Sigmoid colon (tissue), 7 donors: ENCODE measurements at regions of chr17 and their contacts with region 1.

Region 1: DNA sequence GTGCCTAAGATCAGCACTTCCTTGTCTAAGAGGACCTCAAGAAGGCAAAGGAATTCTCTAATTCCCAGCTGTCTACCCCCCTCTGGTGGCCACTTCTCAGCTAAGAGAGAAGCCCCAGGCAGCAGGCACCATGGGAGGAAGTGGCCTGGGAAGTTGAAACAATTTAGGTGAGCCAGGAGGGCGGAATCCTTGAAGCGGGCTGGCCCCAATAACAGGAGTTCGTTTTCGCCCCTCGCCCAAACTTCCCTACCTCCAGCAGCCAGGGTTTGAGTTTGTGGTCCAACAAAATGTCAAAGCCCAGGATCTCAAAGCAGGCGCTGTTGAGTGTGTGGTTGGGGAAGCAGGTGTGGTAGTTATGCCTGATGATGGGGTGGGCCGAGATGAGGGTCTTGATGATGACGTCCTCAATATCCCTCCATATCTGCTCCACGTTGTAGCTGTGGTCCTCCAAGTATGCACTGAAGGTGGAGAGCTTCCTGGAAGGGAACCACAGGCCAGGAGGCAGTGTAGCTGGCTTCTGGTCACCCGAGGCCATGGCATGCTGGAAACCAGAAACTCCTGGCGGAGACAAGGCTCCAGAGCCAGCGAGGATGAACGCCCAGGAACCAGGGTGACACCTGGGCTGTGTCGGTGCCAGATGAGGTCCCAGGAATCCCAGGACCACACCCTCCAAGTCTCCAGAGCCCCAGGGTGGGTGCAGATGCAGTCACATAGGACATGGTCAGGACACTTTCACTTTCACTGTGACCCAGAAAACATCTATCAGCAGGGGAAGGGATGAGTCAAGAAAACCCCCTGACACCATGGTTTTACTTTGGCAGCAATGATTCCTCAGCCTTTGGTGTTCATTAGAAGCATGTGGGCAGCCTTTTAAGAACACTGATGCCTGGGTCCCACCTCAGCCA is 25.6 kb downstream of the TTLL6 start:
- DNase-seq: peak; percentile 86
- H3K4me3 ChIP-seq: no peak overlapping the region
- H3K27ac ChIP-seq: no peak overlapping the region
- H3K4me1 ChIP-seq: peaks cover 0 to 25% (median 12%) of the 10 kb centered on the region in 4 donors
- H3K27me3 ChIP-seq: no peaks in the 10 kb centered on the region
- CTCF ChIP-seq: peak; percentile 61 to 90 (median 70)
- EP300 ChIP-seq: no peak
- POLR2A ChIP-seq: no peak

Region 2: DNA sequence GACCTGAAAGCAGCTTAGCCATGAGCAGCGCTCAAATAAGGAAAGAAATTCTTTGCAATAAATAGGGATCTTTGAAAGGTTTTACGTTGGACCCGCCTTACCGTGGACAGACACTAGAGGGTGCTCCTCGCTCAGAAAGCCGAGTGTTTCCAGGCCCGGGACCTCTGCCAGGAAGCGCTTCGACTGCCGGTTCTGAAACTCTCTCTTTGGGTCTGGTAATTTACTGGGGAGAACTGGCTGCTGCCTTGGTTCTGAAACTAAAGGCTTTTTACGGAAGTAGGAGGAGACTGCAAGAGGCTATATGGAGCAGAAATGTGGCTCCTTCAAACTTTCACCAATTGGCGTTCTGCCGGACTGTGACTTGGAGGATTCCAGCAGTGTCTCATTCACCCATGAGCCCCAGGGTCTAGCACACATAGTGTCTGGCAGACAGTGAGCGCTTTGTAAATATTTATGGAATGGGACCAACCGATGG is 119.6 kb before region 1 on chr17:
- intact Hi-C with region 1: loop called (anchors 1 kb)
- DNase-seq: peak; percentile 91
- H3K4me3 ChIP-seq: peak overlapping the region in 3 of 4 donors; percentile 27 to 36 (median 32)
- H3K27ac ChIP-seq: peak overlapping the region in 3 of 4 donors; percentile 30 to 40 (median 33)
- H3K4me1 ChIP-seq: peaks cover 0 to 10% (median 8%) of the 10 kb centered on the region in 4 donors
- H3K27me3 ChIP-seq: peaks cover 0 to 15% (median 1%) of the 10 kb centered on the region in 3 donors
- CTCF ChIP-seq: peak; percentile 38 to 89 (median 79)
- EP300 ChIP-seq: no peak
- POLR2A ChIP-seq: no peak

Region 3: DNA sequence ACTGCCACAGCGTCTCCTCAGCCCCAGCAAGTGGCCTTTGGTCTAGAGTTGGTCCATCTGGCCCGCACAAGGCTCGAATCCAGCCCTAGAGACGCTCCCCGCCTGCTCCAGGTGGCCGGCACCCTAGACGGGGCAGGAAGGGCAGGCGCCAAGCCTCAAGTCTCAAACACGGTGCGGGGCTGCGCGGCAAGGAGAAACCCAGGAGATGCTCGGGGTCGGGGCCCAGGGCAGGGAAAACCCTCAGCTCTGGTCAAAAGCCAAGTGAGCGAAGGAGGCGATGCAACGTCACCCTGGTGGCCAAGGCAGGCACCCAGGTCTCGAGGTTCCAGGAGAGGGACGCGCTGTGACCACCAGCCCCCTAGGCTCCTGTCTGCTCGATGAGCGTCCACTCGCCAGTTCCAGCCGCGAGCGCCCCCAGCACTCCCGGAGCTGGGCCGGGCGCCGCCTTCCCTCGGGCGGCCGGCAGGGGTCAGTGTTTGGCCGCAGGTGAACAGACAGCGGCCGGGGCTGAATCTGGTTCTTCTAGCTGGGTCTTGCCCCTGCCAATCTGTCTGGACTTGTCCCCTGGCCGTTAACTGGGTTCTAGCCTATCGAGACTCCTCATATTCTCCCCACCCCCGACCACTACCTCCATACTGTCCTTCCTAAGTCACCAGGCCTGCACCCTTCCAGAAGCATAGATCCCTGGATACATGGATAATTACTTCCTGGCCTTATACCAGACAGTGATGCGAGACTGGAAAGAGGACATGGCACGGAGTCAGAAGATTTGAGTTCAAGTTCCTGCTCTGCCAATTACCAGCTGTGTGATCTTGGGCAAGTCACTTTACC is 113.0 kb before region 1 on chr17:
- intact Hi-C with region 1: loop called (anchors 2 kb)
- DNase-seq: peak; percentile 70
- H3K4me3 ChIP-seq: no peak overlapping the region
- H3K27ac ChIP-seq: no peak overlapping the region
- H3K4me1 ChIP-seq: peaks cover 0 to 7% (median 6%) of the 10 kb centered on the region in 4 donors
- H3K27me3 ChIP-seq: peaks cover 3 to 33% (median 8%) of the 10 kb centered on the region in 3 donors
- CTCF ChIP-seq: peak; percentile 47 to 92 (median 74)
- EP300 ChIP-seq: no peak
- POLR2A ChIP-seq: no peak

Region 4: DNA sequence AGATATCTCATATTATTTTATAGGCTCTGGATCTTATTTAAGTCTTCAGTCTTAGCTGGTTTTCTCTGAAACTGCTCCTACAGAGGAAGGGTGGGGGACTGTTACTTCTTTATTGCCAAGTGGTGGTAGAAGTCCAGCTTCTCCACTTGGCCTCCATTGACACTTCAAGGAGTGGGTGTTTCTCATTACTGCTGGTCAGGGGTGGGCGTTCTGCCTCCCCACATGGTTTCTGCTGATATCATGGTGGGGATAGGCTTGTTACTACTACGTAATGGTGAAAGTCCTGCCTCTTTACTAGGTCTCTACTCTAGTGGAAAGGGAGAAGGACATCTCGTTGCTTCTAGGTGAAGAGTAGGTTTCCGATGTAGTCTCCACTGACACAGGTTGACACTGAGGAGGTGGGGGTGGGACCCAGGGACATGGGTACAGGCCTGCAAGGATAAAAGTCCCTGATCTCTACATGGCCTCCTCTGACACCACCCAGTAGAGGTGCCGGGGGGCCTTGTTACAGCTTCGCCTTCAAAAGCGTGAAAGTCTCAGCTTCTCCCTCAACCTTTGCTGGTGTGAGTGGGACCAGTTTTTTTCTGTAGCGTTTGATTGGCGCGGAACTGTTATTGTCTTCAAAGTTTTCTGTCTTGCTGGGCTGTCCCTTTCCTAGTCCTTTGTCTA is 89.4 kb before region 1 on chr17:
- intact Hi-C with region 1: no loop called
- DNase-seq: no peak
- H3K4me3 ChIP-seq: no peak overlapping the region
- H3K27ac ChIP-seq: no peak overlapping the region
- H3K4me1 ChIP-seq: no peaks in the 10 kb centered on the region
- H3K27me3 ChIP-seq: peaks cover 0 to 70% (median 8%) of the 10 kb centered on the region in 3 donors
- CTCF ChIP-seq: no peak
- EP300 ChIP-seq: no peak
- POLR2A ChIP-seq: no peak